Right ventricle myocardium inferior (tissue), 1 donor: ENCODE measurements at regions of chr2 and their contacts with region 1.

Region 1: DNA sequence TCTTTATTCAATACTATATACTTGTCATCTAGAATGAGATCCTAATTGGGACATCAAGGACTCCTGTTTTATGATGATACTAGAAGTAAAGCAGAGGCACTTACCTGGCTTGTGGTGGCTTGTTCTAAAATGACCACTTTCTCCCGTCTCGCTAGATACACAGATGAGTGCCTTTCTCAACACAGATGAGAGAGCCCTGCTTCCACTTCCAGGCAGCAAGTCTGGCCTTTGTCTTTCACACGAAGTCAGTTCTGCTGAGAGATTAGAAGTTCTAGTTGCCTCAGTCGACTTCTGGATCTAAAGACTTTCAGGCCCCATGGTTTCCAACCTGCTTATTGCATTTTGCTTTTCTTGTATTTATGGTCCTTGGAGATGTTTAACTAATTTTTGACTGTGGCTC is 70.3 kb downstream of the PPP1R1C start:
- DNase-seq: no peak
- ATAC-seq: peak; percentile 63

Region 2: GRCh38 chr2:181984814-181985631 is 71.0 kb before region 1 on chr2:
- intact Hi-C with region 1: loop called (anchors 2 kb)
- DNase-seq: no peak
- ATAC-seq: peak; percentile 61

Region 3: GRCh38 chr2:182110347-182110746 is 54.4 kb after region 1 on chr2:
- intact Hi-C with region 1: no loop called
- DNase-seq: no peak
- ATAC-seq: no peak